ENCODE measurements at regions of chr20 and their contacts with region 1.

Region 1: GRCh38 chr20:37693635-37694626 is at the start of gene CTNNBL1:
- DNase-seq: peak; percentile 98
- total RNA-seq, gene CTNNBL1: 42.1 TPM

Region 2: DNA sequence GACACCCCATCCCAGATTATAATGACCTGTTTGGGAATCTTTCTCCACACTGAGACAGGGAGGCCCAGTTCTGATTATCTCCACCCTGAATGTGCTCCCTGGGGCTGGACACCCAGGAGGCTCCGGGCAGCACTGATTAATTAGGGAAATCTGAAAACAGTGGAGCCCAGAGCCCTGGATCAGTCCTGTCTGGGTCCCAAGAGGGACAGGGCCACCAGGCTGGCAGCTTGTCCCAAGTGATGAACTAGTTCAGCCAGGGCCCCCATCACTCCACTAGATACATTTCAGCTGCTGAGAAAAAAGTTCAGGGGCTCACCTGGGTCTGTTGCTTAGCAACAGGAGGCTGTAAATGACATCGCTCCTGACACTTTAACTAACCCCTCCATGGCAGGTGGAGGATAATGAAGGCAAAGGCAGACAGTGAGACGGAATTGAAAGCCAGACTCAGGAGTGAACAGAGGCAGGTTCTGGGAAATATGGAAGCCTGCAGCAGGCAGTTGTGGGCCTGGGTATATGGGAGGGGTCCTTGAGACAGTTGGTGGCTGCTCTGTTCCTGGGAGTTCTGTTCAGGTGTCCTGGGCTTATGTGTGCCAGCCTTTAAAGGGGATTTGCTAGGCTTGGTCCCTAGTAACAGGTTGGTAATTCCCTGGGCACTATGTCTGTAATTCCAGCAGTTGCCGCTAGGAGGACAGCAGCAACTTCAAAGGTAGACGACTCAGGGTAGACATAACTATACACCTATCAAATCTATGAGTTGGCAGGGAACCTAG is 78.4 kb before region 1 on chr20:
- intact Hi-C with region 1: no loop called
- DNase-seq: no peak

Region 3: GRCh38 chr20:37737826-37738420 is 44.0 kb after region 1 on chr20:
- intact Hi-C with region 1: loop called (anchors 5 kb)
- DNase-seq: no peak